ENCODE measurements at regions of chr21 and their contacts with region 1.

Region 1: DNA sequence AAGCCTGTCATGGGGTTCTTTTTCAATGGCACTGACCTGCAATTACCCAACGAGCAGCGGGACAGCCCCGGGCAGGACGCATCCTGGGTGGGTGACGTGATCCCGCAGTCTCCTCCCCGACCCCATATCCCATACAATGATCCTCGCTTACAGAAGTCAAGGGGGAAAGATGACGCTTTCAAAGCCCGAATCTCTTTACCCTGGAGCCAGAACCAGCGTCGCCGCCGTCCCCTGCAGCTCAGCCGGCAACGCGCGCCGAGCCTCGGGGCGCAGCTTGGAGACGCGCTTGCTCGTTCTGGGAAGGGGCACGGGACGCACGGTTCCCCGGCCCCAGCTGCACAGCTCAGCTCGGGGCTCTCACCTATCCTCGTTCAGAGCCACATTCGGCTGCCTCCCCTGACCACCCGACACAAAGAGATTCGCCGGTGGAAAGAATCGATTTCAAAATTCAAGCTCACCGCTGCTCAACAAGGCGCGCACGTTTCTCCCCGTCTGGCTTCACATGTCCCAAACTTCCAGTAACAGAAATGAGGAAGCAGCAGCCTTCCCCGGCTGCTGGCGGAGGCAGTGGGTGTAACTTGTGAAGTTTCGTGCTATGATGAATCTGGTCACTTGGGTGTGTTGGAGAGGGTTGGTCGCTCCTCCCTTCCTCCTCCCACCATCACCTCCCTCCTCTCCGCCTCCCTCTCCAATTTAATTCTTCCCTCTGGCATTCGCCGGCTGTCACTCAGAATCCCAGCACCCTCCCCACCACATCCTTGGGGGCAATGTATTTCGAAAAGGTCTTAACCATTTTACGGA is at the start of gene TIAM1:
- DNase-seq: peak; percentile 64
- H3K4me3 Mint-ChIP-seq: peak within 1 kb of the TSS; percentile 93
- H3K27ac Mint-ChIP-seq: peak within 1 kb of the TSS; percentile 82
- H3K4me1 Mint-ChIP-seq: peaks cover 64% of the 10 kb centered on the region
- H3K27me3 Mint-ChIP-seq: no peaks in the 10 kb centered on the region
- total RNA-seq, gene TIAM1: 74.8 to 74.9 TPM

Region 2: DNA sequence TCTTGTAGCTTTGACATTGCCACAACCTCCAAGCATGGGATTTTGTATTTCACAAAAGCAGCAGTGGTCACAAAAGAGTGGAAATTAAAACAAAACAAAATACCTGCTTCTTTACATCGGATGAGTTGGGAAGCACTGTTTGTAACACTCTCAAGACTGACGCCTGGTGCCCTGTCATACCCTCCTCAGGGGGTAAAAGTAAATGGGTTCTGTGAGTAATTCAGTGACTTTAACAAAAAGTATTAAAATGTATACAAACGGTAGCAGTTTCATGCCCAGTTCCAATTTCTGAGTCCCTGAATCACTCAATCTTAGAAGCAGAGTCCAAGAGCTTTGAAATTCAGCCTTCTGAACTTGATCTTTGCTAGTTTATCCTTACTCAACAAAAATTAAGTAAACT is 152.3 kb before region 1 on chr21:
- CTCF ChIA-PET with region 1: no interaction called
- POLR2A ChIA-PET with region 1: interaction called, 6 read pairs
- intact Hi-C with region 1: loop called (anchors 1 kb)
- DNase-seq: peak; percentile 65
- H3K4me3 Mint-ChIP-seq: peak overlapping the region; percentile 56
- H3K27ac Mint-ChIP-seq: peak overlapping the region; percentile 72
- H3K4me1 Mint-ChIP-seq: peaks cover 90% of the 10 kb centered on the region
- H3K27me3 Mint-ChIP-seq: no peaks in the 10 kb centered on the region

Region 3: GRCh38 chr21:31273278-31273677 is 70.6 kb before region 1 on chr21:
- CTCF ChIA-PET with region 1: no interaction called
- POLR2A ChIA-PET with region 1: no interaction called
- intact Hi-C with region 1: loop called (anchors 2 kb)
- DNase-seq: peak; percentile 67
- H3K4me3 Mint-ChIP-seq: no peak overlapping the region
- H3K27ac Mint-ChIP-seq: peak overlapping the region; percentile 14
- H3K4me1 Mint-ChIP-seq: peaks cover 22% of the 10 kb centered on the region
- H3K27me3 Mint-ChIP-seq: no peaks in the 10 kb centered on the region

Region 4: DNA sequence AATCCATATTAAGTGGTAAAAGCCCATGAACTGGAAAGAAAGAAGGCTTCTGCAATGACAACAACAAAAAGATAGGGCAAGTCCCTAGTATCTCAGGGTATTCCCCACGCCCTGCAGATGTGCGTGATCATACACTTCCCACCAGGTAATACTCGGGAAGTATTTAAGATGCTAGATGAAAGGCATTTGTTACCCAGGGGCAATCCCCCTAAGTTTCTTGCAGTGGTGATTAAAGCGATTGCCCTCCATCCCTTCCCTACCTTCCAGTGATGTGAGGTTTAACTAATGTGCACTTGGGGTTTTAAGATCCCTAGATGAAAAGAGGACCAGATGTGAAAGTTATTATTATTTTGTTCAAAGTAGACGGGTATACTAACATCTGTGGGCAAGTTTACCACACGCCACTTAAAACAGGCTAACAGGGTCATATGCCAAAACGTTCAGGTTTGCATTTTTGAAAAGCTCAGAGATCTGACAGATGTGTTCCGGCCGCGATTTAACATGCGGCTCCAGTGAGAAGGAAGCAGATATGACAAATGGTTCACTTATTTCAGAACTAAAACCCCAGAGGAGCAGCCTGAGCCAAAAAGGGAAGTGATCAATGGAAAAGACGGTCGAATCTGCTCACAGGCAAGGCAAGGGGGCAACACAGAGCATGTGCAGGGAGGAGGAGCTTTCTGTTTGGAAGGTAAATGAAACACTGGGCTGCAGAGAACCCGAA is 17.2 kb before region 1 on chr21:
- CTCF ChIA-PET with region 1: interaction called, 12 read pairs
- POLR2A ChIA-PET with region 1: interaction called, 16 read pairs
- intact Hi-C with region 1: loop called (anchors 1 kb)
- DNase-seq: peak; percentile 81
- H3K4me3 Mint-ChIP-seq: peak overlapping the region; percentile 47
- H3K27ac Mint-ChIP-seq: peak overlapping the region; percentile 88
- H3K4me1 Mint-ChIP-seq: peaks cover 30% of the 10 kb centered on the region
- H3K27me3 Mint-ChIP-seq: no peaks in the 10 kb centered on the region

Region 5: GRCh38 chr21:31387560-31388186 is 43.8 kb after region 1 on chr21:
- CTCF ChIA-PET with region 1: no interaction called
- POLR2A ChIA-PET with region 1: no interaction called
- intact Hi-C with region 1: no loop called
- DNase-seq: no peak
- H3K4me3 Mint-ChIP-seq: no peak overlapping the region
- H3K27ac Mint-ChIP-seq: no peak overlapping the region
- H3K4me1 Mint-ChIP-seq: no peaks in the 10 kb centered on the region
- H3K27me3 Mint-ChIP-seq: no peaks in the 10 kb centered on the region

Region 6: GRCh38 chr21:31543191-31543590 is 199.3 kb after region 1 on chr21:
- CTCF ChIA-PET with region 1: no interaction called
- POLR2A ChIA-PET with region 1: no interaction called
- intact Hi-C with region 1: no loop called
- DNase-seq: no peak
- H3K4me3 Mint-ChIP-seq: no peak overlapping the region
- H3K27ac Mint-ChIP-seq: no peak overlapping the region
- H3K4me1 Mint-ChIP-seq: no peaks in the 10 kb centered on the region
- H3K27me3 Mint-ChIP-seq: no peaks in the 10 kb centered on the region

Region 7: DNA sequence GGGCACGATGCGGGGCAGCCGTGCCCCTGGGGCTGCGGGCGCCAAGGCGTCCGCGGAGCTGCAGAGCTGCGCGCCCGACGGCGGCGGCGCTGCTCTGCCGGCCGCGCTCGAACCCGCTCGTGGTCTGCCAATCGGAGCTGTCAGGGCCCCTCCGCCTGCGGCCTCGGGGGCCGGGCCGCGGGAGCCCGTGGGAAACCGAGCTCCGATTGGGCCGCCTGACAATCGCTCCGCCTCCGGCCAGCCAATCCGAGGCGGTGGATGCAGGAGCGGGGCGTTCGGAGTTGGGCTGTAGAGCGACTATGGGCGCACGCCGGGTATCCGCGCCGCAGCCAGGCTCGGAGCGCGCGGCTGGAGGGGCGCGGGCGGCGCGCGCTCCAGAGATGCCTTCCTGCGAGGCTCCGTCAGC is 215.1 kb after region 1 on chr21:
- CTCF ChIA-PET with region 1: interaction called, 11 read pairs
- POLR2A ChIA-PET with region 1: no interaction called
- intact Hi-C with region 1: no loop called
- DNase-seq: peak; percentile 95
- H3K4me3 Mint-ChIP-seq: peak overlapping the region; percentile 85
- H3K27ac Mint-ChIP-seq: no peak overlapping the region
- H3K4me1 Mint-ChIP-seq: peaks cover 30% of the 10 kb centered on the region
- H3K27me3 Mint-ChIP-seq: peaks cover 22% of the 10 kb centered on the region

Region 8: DNA sequence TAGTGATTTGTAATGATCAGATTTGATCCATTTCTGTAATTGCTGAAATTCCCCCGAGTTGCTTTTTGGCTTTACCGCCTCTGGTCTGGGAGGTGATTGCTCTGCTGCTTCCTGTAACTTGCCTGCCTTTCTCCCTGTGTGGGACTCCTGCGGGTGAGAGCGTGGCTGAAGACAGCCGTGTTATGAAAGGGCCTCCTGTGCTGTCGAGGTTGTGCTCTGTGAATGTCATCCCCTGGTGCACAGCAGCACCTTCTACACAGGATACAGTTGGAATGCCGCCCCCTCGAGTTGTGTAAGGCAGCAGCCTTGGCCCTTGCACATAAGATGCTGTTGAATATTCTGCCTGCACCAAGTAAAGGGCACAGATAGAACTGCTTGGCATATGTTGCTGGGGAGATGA is 321.5 kb after region 1 on chr21:
- CTCF ChIA-PET with region 1: no interaction called
- POLR2A ChIA-PET with region 1: no interaction called
- intact Hi-C with region 1: loop called (anchors 5 kb)
- DNase-seq: peak; percentile 70
- H3K4me3 Mint-ChIP-seq: no peak overlapping the region
- H3K27ac Mint-ChIP-seq: peak overlapping the region; percentile 57
- H3K4me1 Mint-ChIP-seq: peaks cover 93% of the 10 kb centered on the region
- H3K27me3 Mint-ChIP-seq: no peaks in the 10 kb centered on the region